ENCODE measurements at regions of chr9 and their contacts with region 1.

Region 1: DNA sequence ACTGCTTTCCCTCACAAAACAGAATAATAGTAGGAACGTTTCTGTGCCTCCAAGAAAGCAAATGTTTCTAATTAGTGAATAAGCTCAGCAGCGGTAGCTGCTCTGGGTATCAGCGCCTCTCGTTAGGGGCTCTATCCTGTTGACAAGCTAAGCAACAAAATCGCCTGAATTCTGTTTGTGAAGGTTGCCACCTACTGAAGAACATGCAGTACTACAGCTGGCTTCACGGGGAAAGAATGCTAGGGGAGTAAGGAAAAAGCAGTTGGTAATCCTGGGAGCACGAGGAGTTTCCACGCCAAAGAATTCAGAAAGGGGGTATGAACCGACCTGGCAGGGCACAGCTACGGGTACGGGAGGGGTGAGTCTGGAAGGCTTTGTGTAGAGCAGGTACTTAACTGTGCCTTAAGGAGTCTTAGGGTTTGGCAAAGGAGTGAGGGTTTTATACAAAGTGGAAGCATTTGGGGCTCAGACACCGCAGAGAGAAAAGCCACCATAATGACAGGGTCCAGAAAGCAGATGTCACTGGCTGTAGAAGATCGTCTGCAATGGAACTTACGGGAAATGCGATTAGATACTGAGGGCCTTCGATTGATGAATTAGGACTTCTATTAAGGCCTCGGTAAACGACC is 171.7 kb downstream of the TTC39B start:
- DNase-seq: peak; percentile 51 to 63
- H3K4me3 ChIP-seq: peak overlapping the region; percentile 24
- H3K4me3 Mint-ChIP-seq: peak overlapping the region; percentile 64
- H3K27ac Mint-ChIP-seq: peak overlapping the region; percentile 27
- H3K4me1 ChIP-seq: no peaks in the 10 kb centered on the region
- H3K4me1 Mint-ChIP-seq: no peaks in the 10 kb centered on the region
- H3K27me3 ChIP-seq: no peaks in the 10 kb centered on the region
- H3K27me3 Mint-ChIP-seq: no peaks in the 10 kb centered on the region
- CTCF ChIP-seq: peak; percentile 61 to 71

Region 2: GRCh38 chr9:14466429-14466818 is 668.9 kb before region 1 on chr9:
- CTCF ChIA-PET with region 1: no interaction called
- POLR2A ChIA-PET with region 1: no interaction called
- intact Hi-C with region 1: loop called (anchors 10 kb)
- DNase-seq: no peak
- H3K4me3 ChIP-seq: no peak overlapping the region
- H3K4me3 Mint-ChIP-seq: no peak overlapping the region
- H3K27ac Mint-ChIP-seq: no peak overlapping the region
- H3K4me1 ChIP-seq: no peaks in the 10 kb centered on the region
- H3K4me1 Mint-ChIP-seq: no peaks in the 10 kb centered on the region
- H3K27me3 ChIP-seq: no peaks in the 10 kb centered on the region
- H3K27me3 Mint-ChIP-seq: peaks cover 7% of the 10 kb centered on the region
- CTCF ChIP-seq: no peak

Region 3: DNA sequence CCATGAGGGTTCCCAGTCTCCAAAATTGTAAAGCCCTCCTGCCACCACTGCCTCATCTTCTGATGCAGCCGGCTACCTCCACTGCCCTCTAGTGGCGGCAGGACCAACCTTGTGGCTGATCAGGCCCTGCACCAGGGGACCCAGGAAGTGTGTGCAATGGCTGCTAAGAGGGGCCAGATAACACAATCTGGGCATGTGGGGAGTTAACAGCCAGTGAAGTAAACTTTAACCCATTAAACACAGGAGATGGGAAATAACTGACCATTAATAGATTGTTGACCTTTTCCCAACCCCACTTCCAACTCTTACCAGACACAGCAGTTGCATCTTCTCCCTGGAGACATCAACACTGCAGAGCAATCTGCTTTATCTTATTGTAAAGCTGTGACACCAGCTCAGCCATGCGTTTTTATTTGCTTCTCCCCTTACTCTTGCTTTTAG is 288.4 kb before region 1 on chr9:
- CTCF ChIA-PET with region 1: no interaction called
- POLR2A ChIA-PET with region 1: no interaction called
- intact Hi-C with region 1: loop called (anchors 1 kb)
- DNase-seq: peak; percentile 42 to 68
- H3K4me3 ChIP-seq: no peak overlapping the region
- H3K4me3 Mint-ChIP-seq: no peak overlapping the region
- H3K27ac Mint-ChIP-seq: no peak overlapping the region
- H3K4me1 ChIP-seq: no peaks in the 10 kb centered on the region
- H3K4me1 Mint-ChIP-seq: no peaks in the 10 kb centered on the region
- H3K27me3 ChIP-seq: no peaks in the 10 kb centered on the region
- H3K27me3 Mint-ChIP-seq: peaks cover 5% of the 10 kb centered on the region
- CTCF ChIP-seq: peak; percentile 62 to 65

Region 4: GRCh38 chr9:15018096-15018637 is 117.1 kb before region 1 on chr9:
- CTCF ChIA-PET with region 1: no interaction called
- POLR2A ChIA-PET with region 1: no interaction called
- intact Hi-C with region 1: loop called (anchors 1 kb)
- DNase-seq: peak; percentile 55 to 67
- H3K4me3 ChIP-seq: no peak overlapping the region
- H3K4me3 Mint-ChIP-seq: peak overlapping the region; percentile 44
- H3K27ac Mint-ChIP-seq: no peak overlapping the region
- H3K4me1 ChIP-seq: peaks cover 4% of the 10 kb centered on the region; the same call in 1 of the 2 replicates
- H3K4me1 Mint-ChIP-seq: no peaks in the 10 kb centered on the region
- H3K27me3 ChIP-seq: no peaks in the 10 kb centered on the region
- H3K27me3 Mint-ChIP-seq: no peaks in the 10 kb centered on the region
- CTCF ChIP-seq: peak in 1 of 2 experiments; percentile 19

Region 5: GRCh38 chr9:15058236-15058635 is 77.0 kb before region 1 on chr9:
- CTCF ChIA-PET with region 1: no interaction called
- POLR2A ChIA-PET with region 1: no interaction called
- intact Hi-C with region 1: loop called (anchors 1 kb)
- DNase-seq: no peak
- H3K4me3 ChIP-seq: no peak overlapping the region
- H3K4me3 Mint-ChIP-seq: no peak overlapping the region
- H3K27ac Mint-ChIP-seq: no peak overlapping the region
- H3K4me1 ChIP-seq: no peaks in the 10 kb centered on the region
- H3K4me1 Mint-ChIP-seq: no peaks in the 10 kb centered on the region
- H3K27me3 ChIP-seq: no peaks in the 10 kb centered on the region
- H3K27me3 Mint-ChIP-seq: no peaks in the 10 kb centered on the region
- CTCF ChIP-seq: no peak

Region 6: GRCh38 chr9:15104826-15105420 is 30.4 kb before region 1 on chr9:
- CTCF ChIA-PET with region 1: interaction called, 11 read pairs
- POLR2A ChIA-PET with region 1: no interaction called
- intact Hi-C with region 1: loop called (anchors 1 kb)
- DNase-seq: peak; percentile 40 to 56
- H3K4me3 ChIP-seq: no peak overlapping the region
- H3K4me3 Mint-ChIP-seq: no peak overlapping the region
- H3K27ac Mint-ChIP-seq: no peak overlapping the region
- H3K4me1 ChIP-seq: 0 out of 2 replicates have a peak, but pooled peaks cover 5% of the 10 kb centered on the region
- H3K4me1 Mint-ChIP-seq: peaks cover 5% of the 10 kb centered on the region
- H3K27me3 ChIP-seq: no peaks in the 10 kb centered on the region
- H3K27me3 Mint-ChIP-seq: peaks cover 2% of the 10 kb centered on the region
- CTCF ChIP-seq: peak; percentile 54 to 67